Left cardiac atrium (tissue), 4 donors: ENCODE measurements at regions of chr2 and their contacts with region 1.

Region 1: DNA sequence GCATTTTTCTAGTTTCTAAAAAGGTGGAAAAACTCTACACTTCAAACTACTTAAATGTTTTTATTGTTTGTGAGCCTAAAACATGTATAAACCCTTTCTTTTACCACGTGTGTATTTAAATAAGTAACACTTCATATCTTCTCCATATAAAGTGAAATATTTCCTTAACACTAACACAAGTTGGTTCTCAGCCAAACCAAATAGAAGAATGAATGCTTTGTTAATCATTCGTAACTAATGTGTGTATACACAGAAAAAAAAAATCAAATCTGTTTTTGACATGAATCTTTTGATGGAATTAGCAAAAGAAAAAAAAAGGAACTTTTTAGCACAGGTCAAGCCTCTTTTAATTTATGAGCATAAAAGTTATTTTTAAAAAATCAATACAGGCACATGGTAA is 89.3 kb downstream of the EHBP1 start:
- DNase-seq: no peak
- ATAC-seq: no peak

Region 2: DNA sequence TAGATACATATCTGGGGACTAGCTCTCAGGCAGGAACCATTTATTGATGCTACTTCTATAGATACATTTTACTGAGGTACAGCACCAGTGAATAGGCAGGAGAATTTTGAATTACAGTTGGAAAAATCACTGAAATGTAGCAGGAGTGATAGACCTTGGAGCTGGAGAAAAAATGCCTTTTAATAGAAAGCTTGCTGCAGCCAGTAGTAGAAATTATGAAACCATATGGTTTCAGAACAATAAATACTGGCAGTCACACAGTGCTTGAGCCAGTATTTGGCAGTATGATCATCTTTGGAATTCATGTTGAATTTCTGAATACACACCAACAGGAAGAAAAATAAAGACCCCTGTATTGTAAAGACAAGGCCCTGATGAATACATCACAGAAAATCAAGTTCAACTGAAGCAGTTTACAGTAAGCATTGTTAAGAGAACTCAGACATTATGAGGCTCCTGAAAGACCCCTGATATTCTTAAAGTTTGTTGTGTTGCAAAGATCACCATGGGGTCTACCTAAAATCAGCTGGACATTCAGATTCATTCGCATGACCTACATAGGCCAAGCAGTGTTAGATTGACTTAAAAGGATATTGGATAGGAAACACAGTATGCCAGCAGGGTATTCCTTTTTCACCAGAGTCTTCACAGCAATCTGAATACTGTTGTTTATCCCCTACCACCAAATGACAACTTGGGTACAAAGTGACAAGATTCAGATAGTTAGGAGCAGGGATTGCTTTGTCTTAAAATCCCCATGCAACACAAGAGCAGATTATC is 49.7 kb after region 1 on chr2:
- intact Hi-C with region 1: no loop called
- DNase-seq: no peak
- ATAC-seq: no peak

Region 3: DNA sequence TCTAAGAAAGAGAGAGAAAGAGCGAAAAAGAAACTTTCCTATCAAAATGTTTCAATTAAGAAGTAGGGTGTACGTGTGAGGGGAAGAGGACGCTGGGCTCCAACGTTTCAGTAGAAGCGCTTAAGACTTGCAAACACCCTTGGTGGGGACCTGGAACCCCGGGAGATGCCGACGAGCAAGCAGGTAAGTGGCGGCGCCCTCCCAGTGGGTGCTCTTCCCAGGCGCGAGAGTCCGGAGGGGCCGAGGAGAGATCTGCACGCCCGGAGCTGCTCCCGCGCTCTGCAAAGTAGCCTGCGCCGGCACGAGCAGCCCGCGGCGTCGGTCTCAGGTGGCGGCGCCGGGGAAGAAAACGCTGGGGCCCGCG is 255.2 kb after region 1 on chr2:
- intact Hi-C with region 1: loop called in 1 of 2 experiments (anchors 10 kb)
- DNase-seq: no peak
- ATAC-seq: peak; percentile 28 to 35

Region 4: DNA sequence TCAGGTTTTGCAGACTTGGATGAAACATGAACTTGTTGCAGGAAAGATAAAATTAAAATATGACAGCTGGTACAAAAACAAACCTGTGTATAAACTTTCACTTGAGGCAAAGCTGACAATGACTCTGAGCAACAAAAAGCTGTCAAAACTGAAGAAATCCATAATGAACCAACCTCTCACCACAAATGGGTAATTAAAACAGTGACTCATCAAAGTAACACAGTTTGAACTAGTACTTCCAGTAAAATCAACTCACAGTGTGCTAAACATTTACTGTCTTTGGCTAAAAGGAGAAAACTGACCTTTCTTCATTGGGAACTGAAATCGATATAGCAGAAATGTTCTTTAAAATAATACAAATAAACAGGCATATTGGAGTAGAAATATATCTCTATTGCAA is 583.8 kb after region 1 on chr2:
- intact Hi-C with region 1: no loop called
- DNase-seq: no peak
- ATAC-seq: no peak